ENCODE measurements at regions of chr3 and their contacts with region 1.

Region 1: DNA sequence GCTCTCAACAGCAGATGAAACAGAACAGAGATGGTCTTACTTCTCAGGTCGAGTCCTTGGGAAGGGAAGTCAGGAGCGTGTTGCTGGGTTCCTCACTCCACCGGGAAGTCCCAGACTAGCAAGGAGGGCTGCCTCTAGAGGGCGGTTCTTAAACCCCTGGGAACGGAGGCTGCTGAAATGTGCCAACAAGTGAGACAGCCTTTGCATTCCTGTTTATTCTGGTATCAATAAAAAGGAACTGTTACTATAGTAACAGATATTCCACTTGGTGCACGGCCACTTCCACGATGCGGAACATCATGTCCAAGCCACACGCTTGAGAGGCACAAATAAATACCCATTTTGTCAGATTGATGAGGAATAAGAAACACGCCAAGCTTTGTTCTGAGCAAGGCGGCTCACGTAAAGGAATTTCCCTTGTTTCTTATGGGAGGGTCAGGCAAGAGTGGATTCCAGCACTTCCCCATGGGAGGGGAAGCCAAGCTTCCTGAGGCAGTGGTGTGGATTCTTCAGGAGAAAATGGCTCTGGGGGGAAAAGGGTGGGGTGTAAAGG is at the start of gene FAM107A:
- DNase-seq: peak in 1 of 2 donors; percentile 30
- ATAC-seq: peak; percentile 75 to 86
- H3K4me3 ChIP-seq: peak within 1 kb of the TSS; percentile 32 to 55 (median 43)
- H3K27ac ChIP-seq: peak within 1 kb of the TSS; percentile 66 to 81 (median 81)
- H3K4me1 ChIP-seq: peaks cover 0 to 4% of the 10 kb centered on the region in 2 donors
- H3K27me3 ChIP-seq: no peaks in the 10 kb centered on the region
- CTCF ChIP-seq: peak in 1 of 5 experiments; percentile 16
- POLR2A ChIP-seq: peak; percentile 31 to 63
- total RNA-seq, gene FAM107A: 21.1 to 28.5 (median 27.6) TPM

Region 2: DNA sequence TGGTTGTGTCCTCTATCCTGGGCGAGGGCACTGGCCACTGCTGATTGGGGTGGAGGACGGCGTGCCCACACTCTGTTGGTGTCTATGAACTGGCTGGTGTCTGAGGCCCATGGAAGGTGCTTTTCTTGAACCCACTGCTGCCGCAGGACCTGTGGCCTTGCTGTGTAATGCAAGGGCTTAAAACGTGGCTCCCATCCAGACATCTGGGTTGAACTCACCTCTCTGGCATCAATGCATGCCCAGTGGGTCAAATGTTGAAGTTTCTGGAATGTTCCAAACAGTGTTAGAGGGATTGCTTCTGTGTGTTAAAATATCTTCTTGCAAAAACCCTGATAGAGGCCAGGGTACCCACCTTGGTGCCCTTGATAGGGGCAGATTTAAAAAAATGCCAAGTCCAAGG is 46.6 kb after region 1 on chr3:
- in situ Hi-C with region 1: loop called in 3 of 4 experiments (anchors 5 kb)
- intact Hi-C with region 1: no loop called
- DNase-seq: no peak
- ATAC-seq: no peak
- H3K4me3 ChIP-seq: no peak overlapping the region
- H3K27ac ChIP-seq: no peak overlapping the region
- H3K4me1 ChIP-seq: peaks cover 16 to 19% of the 10 kb centered on the region in 2 donors
- H3K27me3 ChIP-seq: no peaks in the 10 kb centered on the region
- CTCF ChIP-seq: no peak
- POLR2A ChIP-seq: no peak

Region 3: GRCh38 chr3:58640700-58641372 is 63.5 kb after region 1 on chr3:
- in situ Hi-C with region 1: no loop called
- intact Hi-C with region 1: no loop called
- DNase-seq: peak; percentile 15 to 46
- ATAC-seq: peak; percentile 78 to 87
- H3K4me3 ChIP-seq: no peak overlapping the region
- H3K27ac ChIP-seq: no peak overlapping the region
- H3K4me1 ChIP-seq: peaks cover 0 to 4% of the 10 kb centered on the region in 2 donors
- H3K27me3 ChIP-seq: no peaks in the 10 kb centered on the region
- CTCF ChIP-seq: peak; percentile 57 to 83 (median 73)
- POLR2A ChIP-seq: no peak